Sciatic nerve (tissue), 2 donors: ENCODE measurements at regions of chr9 and their contacts with region 1.

Region 1: DNA sequence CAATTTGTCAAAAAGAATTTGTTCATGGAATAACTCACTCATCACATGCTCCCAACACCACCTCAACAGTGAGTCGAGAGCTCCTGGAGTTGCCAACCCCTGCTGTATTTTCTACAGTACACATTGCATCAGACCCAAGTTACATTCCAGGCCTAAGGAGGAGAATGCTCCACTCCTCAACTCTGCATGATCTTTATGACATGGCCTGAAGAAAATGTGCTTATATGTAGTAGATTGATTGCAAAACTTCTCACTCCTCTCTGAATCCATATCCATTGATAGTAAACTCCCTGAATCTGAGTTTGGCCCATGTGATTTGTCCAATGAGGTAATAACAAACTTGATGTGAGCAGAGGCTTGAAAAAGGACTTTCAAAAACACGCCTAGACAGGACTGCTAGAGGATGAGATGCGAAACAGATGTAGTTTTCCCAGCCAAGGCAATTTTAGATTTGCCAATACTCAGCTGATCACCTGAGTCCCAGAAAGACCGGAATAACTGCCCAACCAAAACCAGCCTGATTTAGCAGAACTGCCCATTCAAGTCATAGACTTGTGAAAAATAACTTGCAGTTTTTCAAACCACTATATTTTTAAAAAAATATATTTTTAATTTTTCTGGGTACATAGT is 29.0 kb upstream of the PAPPA start:
- DNase-seq: no peak
- ATAC-seq: no peak

Region 2: GRCh38 chr9:116198344-116198743 is 73.8 kb after region 1 on chr9:
- intact Hi-C with region 1: loop called (anchors 2 kb)
- DNase-seq: no peak
- ATAC-seq: no peak